Esophagus muscularis mucosa (tissue), 4 donors: ENCODE measurements at regions of chr10 and their contacts with region 1.

Region 1: DNA sequence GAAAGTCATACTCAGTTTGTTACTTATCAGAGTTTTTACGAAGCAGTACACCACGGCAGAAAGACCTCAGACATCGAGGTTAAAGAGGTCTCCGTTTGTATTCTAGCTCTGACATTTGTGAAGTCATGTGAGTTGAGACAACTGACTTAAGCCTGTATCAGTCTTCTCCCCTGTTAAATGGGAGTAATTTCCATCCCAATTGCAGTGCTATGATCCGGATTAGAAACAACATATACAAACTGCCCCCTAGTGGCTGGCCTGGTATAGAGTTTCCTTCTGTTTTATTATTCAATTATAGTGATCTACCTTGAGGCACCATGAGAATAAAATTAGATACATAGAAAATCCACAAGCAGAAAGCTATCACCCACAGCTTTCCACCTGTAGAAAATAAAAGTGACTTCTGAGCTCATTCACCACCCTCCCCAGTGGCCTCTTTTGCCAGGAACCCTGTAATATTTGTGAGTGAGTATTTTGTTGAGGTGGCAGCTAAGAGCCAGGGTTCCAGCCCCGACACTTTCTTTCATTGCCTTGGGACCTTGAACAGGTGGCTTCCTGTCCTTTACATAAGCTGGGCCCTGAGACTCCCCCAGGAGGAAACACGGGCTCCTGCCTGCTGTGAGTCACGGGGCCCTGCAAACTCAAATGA is 607.2 kb upstream of the MGMT start:
- DNase-seq: peak; percentile 24
- H3K4me3 ChIP-seq: no peak overlapping the region
- H3K27ac ChIP-seq: no peak overlapping the region
- H3K4me1 ChIP-seq: peaks cover 13 to 20% (median 15%) of the 10 kb centered on the region in 4 donors
- H3K27me3 ChIP-seq: no peaks in the 10 kb centered on the region
- CTCF ChIP-seq: peak; percentile 36 to 54 (median 53)
- EP300 ChIP-seq: no peak
- POLR2A ChIP-seq: no peak

Region 2: DNA sequence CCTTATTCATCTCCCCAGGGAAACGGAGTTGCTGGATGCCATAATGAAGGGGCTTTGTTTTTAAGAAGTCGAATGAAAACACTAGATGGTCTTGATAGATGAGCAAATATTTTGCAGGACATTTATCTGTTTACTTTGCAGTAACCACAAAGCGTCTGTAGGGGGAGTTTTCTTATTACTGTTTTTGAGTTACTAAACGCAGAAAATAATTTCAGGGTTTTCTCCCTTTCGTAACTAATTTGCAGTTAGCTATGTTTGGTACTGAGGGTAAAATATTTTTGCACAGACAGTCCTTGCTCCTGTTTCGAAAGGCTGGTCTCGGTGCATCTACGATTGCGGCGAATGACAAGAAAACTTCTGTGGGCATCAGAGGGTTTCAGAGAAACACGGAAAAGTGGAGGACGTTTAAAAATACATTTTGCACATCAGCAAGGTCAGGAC is 228.0 kb before region 1 on chr10:
- intact Hi-C with region 1: loop called (anchors 5 kb)
- DNase-seq: peak; percentile 62
- H3K4me3 ChIP-seq: no peak overlapping the region
- H3K27ac ChIP-seq: no peak overlapping the region
- H3K4me1 ChIP-seq: peaks cover 0 to 10% (median 3%) of the 10 kb centered on the region in 4 donors
- H3K27me3 ChIP-seq: no peaks in the 10 kb centered on the region
- CTCF ChIP-seq: peak; percentile 31 to 59 (median 50)
- EP300 ChIP-seq: no peak
- POLR2A ChIP-seq: no peak